Mammary epithelial cell (primary cell): ENCODE measurements at regions of chr6 and their contacts with region 1.

Region 1: GRCh38 chr6:89819336-89820130 is at the start of gene MDN1:
- DNase-seq: peak; percentile 95
- H3K4me3 ChIP-seq: peak within 1 kb of the TSS; percentile 92 to 100 (median 94)
- H3K27ac ChIP-seq: peak within 1 kb of the TSS; percentile 80
- H3K4me1 ChIP-seq: peaks cover 12% of the 10 kb centered on the region
- H3K27me3 ChIP-seq: no peaks in the 10 kb centered on the region
- CTCF ChIP-seq: no peak
- total RNA-seq, gene MDN1: 18.2 to 30.3 TPM

Region 2: GRCh38 chr6:89829591-89830385 is 10.3 kb after region 1 on chr6 and contains the start of gene CASP8AP2:
- CTCF ChIA-PET with region 1: no interaction called
- dilution Hi-C with region 1: no loop called
- in situ Hi-C with region 1: no loop called
- intact Hi-C with region 1: loop called (anchors 1 kb)
- DNase-seq: peak; percentile 99
- H3K4me3 ChIP-seq: peak within 1 kb of the TSS; percentile 80 to 95 (median 81)
- H3K27ac ChIP-seq: peak within 1 kb of the TSS; percentile 75
- H3K4me1 ChIP-seq: no peaks in the 10 kb centered on the region
- H3K27me3 ChIP-seq: no peaks in the 10 kb centered on the region
- CTCF ChIP-seq: no peak
- total RNA-seq, gene CASP8AP2: 10.8 to 14.2 TPM

Region 3: DNA sequence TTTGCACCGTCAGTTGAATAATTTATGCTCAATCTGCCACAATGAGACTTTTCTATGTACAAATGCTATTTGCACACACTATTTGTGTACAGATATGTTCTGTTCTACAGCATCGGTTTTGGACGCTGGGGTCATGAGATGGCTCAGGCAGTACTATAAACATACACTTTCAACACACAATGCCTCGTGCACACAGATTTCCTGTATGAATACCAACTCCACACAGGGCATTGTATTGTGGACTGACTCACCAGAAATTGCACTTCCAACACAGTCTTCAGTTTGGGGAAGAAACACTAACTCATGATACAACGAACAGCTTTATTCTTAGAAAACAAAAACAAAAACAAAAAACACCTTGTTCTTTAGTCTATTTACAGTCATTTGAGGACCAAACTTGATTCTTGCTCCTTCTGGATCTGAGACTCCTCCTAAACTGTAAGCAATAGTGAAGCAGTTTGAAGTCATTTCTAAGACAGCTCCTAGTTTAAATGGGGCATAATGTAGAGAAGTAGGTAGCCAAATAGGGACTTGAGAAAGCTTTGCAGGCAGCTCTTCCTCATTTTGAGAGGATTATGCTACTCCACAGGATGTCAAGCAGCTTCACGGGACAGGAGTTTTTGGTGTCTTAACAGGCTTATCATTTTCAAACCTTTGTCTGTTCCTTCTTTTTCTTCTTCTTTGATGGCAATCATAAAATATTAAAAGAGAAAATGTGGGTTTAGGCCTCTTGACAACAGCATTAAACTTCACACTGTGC is 108.4 kb after region 1 on chr6:
- CTCF ChIA-PET with region 1: no interaction called
- dilution Hi-C with region 1: no loop called
- in situ Hi-C with region 1: no loop called
- intact Hi-C with region 1: no loop called
- DNase-seq: peak; percentile 62
- H3K4me3 ChIP-seq: no peak overlapping the region
- H3K27ac ChIP-seq: no peak overlapping the region
- H3K4me1 ChIP-seq: peaks cover 39% of the 10 kb centered on the region
- H3K27me3 ChIP-seq: no peaks in the 10 kb centered on the region
- CTCF ChIP-seq: no peak